ENCODE measurements at regions of chr1 and their contacts with region 1.

Region 1: DNA sequence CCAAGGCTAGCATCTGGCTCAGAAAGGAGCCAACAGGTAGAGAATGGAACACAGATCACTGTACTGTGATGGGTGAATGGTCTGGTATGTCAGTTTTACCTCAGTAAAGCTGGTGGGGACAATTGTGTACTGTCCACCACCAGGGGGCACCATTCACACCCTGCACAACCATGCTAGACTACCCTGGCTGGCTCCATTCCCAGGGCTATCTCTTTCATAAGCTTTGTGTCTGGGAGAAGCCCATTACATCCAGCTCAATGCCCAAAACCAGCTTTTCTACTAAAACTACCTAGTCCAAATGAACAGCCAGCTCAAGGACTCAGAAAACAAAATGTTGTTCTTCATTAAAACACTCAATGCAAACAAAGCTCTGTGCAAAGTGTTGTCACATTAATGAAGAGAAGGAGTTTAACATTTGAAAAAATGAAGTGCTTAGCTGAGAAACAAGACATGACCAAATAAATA is 62.0 kb upstream of the RASAL2 start:
- DNase-seq: peak; percentile 95
- H3K4me3 ChIP-seq: no peak overlapping the region
- H3K27ac ChIP-seq: no peak overlapping the region
- H3K4me1 ChIP-seq: no peaks in the 10 kb centered on the region
- H3K27me3 ChIP-seq: no peaks in the 10 kb centered on the region
- CTCF ChIP-seq: peak; percentile 86

Region 2: GRCh38 chr1:178189814-178190213 is 157.9 kb after region 1 on chr1:
- intact Hi-C with region 1: loop called (anchors 10 kb)
- DNase-seq: no peak
- H3K4me3 ChIP-seq: no peak overlapping the region
- H3K27ac ChIP-seq: no peak overlapping the region
- H3K4me1 ChIP-seq: no peaks in the 10 kb centered on the region
- H3K27me3 ChIP-seq: no peaks in the 10 kb centered on the region
- CTCF ChIP-seq: no peak

Region 3: DNA sequence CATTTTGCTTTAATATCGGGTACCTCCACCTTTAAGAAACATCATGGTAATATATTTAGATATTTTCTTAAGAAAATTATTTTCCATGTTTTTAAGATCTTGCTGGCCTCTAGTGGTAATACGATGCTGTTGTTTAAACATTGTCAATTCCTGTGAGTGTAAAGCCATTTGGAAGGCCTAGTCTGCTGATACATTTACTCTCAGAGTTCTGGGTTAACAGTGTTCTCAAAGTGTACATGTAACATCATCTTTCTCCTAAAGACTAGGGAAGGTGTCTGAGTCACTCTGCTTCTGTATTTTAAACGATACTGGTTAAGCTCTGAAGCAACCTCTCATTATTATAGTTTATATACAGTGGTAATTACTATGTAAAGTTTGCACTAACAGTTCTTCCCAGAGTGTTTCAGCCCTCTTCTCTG is 251.1 kb after region 1 on chr1:
- intact Hi-C with region 1: loop called (anchors 5 kb)
- DNase-seq: no peak
- H3K4me3 ChIP-seq: no peak overlapping the region
- H3K27ac ChIP-seq: no peak overlapping the region
- H3K4me1 ChIP-seq: no peaks in the 10 kb centered on the region
- H3K27me3 ChIP-seq: no peaks in the 10 kb centered on the region
- CTCF ChIP-seq: no peak